PC-3 (cell line): ENCODE measurements at regions of chr5 and their contacts with region 1.

Region 1: GRCh38 chr5:40386289-40386688 is 293.4 kb upstream of the PTGER4 start:
- DNase-seq: peak; percentile 43
- ATAC-seq: no peak
- H3K4me3 ChIP-seq: no peak overlapping the region
- H3K27ac ChIP-seq: peak overlapping the region; percentile 89
- H3K4me1 ChIP-seq: peaks cover 50% of the 10 kb centered on the region
- H3K27me3 ChIP-seq: no peaks in the 10 kb centered on the region
- CTCF ChIP-seq: no peak

Region 2: DNA sequence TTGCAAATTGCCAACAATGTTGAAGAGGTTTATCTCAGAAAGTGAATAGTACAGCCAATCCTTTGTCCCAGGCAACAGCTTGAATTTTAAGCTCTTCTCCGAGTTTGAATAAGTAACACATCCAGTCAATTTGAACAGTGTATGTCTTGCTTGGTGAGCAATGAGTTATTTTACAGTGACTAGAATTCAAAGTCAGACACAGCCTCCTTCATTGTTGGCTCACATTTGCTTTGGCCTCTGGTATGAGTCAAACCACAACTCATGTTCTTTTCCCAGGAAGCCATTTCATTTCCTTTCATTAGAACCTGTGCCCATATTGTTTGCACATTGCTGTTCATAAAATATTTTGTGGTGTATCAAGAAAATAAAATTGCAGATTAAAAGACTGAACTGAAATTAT is 339.5 kb before region 1 on chr5:
- CTCF ChIA-PET with region 1: no interaction called
- POLR2A ChIA-PET with region 1: no interaction called
- intact Hi-C with region 1: loop called (anchors 5 kb)
- DNase-seq: peak; percentile 93
- ATAC-seq: peak; percentile 92
- H3K4me3 ChIP-seq: 0 out of 2 replicates have a peak overlapping the region, but pooled peaks have one; percentile 2
- H3K27ac ChIP-seq: peak overlapping the region; percentile 93
- H3K4me1 ChIP-seq: peaks cover 30% of the 10 kb centered on the region
- H3K27me3 ChIP-seq: no peaks in the 10 kb centered on the region
- CTCF ChIP-seq: no peak

Region 3: GRCh38 chr5:40233268-40233667 is 153.0 kb before region 1 on chr5:
- CTCF ChIA-PET with region 1: no interaction called
- POLR2A ChIA-PET with region 1: no interaction called
- intact Hi-C with region 1: loop called (anchors 10 kb)
- DNase-seq: peak; percentile 11
- ATAC-seq: no peak
- H3K4me3 ChIP-seq: no peak overlapping the region
- H3K27ac ChIP-seq: no peak overlapping the region
- H3K4me1 ChIP-seq: peaks cover 39% of the 10 kb centered on the region
- H3K27me3 ChIP-seq: no peaks in the 10 kb centered on the region
- CTCF ChIP-seq: no peak

Region 4: DNA sequence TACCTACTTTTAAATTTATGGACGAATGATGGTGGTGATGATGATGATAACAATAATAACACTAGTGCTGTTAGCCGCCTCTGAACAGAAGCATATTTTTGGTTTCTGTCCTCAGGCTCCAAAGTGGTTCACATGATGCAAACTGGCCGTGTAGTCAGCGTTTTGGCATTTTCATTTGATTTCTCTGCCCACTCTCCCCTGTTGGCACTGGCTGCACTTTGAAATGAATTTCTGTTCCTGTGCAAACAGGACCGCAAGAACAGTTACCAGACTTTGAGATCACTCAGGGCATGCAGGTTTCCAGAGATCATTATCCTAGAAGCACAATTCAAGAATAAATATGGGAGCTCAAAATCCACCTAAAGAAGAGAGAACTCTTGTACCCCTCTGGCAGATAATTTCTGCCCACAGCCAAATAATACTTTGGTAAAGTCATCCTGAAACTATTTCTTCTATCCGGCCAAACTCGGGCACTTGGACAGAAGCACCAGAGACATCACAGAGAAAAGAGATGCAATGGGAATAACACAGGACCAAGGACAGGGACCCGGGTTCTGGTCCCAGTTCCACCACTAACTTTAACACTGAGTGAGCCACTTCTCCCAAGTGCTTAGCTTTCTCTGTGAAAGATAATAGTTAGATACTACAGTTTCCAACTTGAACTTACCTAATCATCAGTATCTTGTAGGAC is 91.7 kb after region 1 on chr5:
- CTCF ChIA-PET with region 1: no interaction called
- POLR2A ChIA-PET with region 1: no interaction called
- intact Hi-C with region 1: loop called (anchors 1 kb)
- DNase-seq: peak; percentile 96
- ATAC-seq: peak; percentile 86
- H3K4me3 ChIP-seq: no peak overlapping the region; the same call in 1 of the 2 replicates
- H3K27ac ChIP-seq: peak overlapping the region; percentile 37
- H3K4me1 ChIP-seq: peaks cover 31% of the 10 kb centered on the region
- H3K27me3 ChIP-seq: no peaks in the 10 kb centered on the region
- CTCF ChIP-seq: no peak

Region 5: GRCh38 chr5:40551496-40552491 is 165.5 kb after region 1 on chr5:
- CTCF ChIA-PET with region 1: no interaction called
- POLR2A ChIA-PET with region 1: no interaction called
- intact Hi-C with region 1: loop called (anchors 5 kb)
- DNase-seq: peak; percentile 98
- ATAC-seq: peak; percentile 93
- H3K4me3 ChIP-seq: peak overlapping the region; percentile 44
- H3K27ac ChIP-seq: peak overlapping the region; percentile 92
- H3K4me1 ChIP-seq: peaks cover 41% of the 10 kb centered on the region
- H3K27me3 ChIP-seq: no peaks in the 10 kb centered on the region
- CTCF ChIP-seq: no peak

Region 6: GRCh38 chr5:40736103-40736875 is 350.0 kb after region 1 on chr5:
- CTCF ChIA-PET with region 1: no interaction called
- POLR2A ChIA-PET with region 1: no interaction called
- intact Hi-C with region 1: loop called (anchors 5 kb)
- DNase-seq: peak; percentile 95
- ATAC-seq: peak; percentile 61
- H3K4me3 ChIP-seq: no peak overlapping the region
- H3K27ac ChIP-seq: no peak overlapping the region
- H3K4me1 ChIP-seq: peaks cover 16% of the 10 kb centered on the region
- H3K27me3 ChIP-seq: no peaks in the 10 kb centered on the region
- CTCF ChIP-seq: peak; percentile 94